CD4-positive, alpha-beta memory T cell (primary cell): ENCODE measurements at regions of chr2 and their contacts with region 1.

Region 1: GRCh38 chr2:62456721-62457539 is 49.1 kb downstream of the TMEM17 start:
- DNase-seq: peak in 4 of 5 donors; percentile 50 to 65 (median 54)
- H3K4me3 ChIP-seq: peak overlapping the region in 1 of 2 donors; percentile 24
- H3K4me3 Mint-ChIP-seq: peak overlapping the region in 7 of 8 donors; percentile 24 to 70 (median 50)
- H3K27ac ChIP-seq: no peak overlapping the region
- H3K27ac Mint-ChIP-seq: peak overlapping the region in 1 of 7 donors; percentile 66
- H3K4me1 ChIP-seq: peaks cover 4% of the 10 kb centered on the region
- H3K4me1 Mint-ChIP-seq: no peaks in the 10 kb centered on the region
- H3K27me3 ChIP-seq: no peaks in the 10 kb centered on the region
- H3K27me3 Mint-ChIP-seq: peaks cover 3 to 4% of the 10 kb centered on the region in 2 donors

Region 2: GRCh38 chr2:62467475-62468321 is 10.8 kb after region 1 on chr2:
- CTCF ChIA-PET with region 1: interaction called, 10 read pairs
- POLR2A ChIA-PET with region 1: no interaction called
- intact Hi-C with region 1: no loop called
- DNase-seq: no peak
- H3K4me3 ChIP-seq: no peak overlapping the region
- H3K4me3 Mint-ChIP-seq: no peak overlapping the region
- H3K27ac ChIP-seq: no peak overlapping the region
- H3K27ac Mint-ChIP-seq: no peak overlapping the region
- H3K4me1 ChIP-seq: no peaks in the 10 kb centered on the region
- H3K4me1 Mint-ChIP-seq: no peaks in the 10 kb centered on the region
- H3K27me3 ChIP-seq: no peaks in the 10 kb centered on the region
- H3K27me3 Mint-ChIP-seq: peaks cover 5 to 6% of the 10 kb centered on the region in 2 donors

Region 3: DNA sequence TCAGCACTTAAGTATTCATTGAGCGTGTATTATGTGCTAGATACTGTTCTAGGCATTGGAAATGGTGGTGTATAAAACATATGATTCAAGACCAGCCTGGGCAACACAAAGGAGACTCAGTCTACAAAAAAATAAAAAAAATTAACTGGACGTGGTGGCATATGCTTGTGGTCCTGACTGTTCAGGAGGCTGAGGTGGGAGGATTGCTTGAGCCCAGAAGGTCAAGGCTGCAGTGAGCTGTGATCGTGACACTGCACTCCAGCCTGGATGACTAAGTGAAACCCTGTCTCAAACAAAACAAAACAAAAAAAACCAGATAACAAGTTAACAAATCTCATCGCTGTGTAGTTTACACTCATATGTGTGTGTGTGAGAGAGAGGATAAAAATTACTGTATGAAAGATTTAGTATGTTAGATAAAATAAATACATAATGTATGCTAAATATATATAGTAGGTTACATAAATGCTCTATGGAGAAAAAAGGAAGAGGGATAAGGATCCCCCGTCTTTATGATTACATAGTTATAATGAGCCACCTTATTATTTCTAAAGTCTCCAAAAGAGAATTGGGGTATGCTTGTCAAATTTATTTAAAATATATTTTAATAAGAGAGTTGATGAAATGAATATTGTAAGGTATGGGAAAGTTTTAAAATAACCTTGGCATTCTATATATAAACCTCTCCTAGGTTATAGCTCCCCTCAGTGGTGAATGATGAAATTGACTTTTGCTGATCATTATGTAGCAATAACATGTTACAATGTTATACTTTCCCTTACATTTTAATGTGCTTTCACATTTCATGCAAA is 317.8 kb after region 1 on chr2:
- CTCF ChIA-PET with region 1: interaction called, 207 read pairs
- POLR2A ChIA-PET with region 1: no interaction called
- intact Hi-C with region 1: loop called (anchors 1 kb)
- DNase-seq: peak in 4 of 5 donors; percentile 25 to 42 (median 32)
- H3K4me3 ChIP-seq: no peak overlapping the region
- H3K4me3 Mint-ChIP-seq: no peak overlapping the region
- H3K27ac ChIP-seq: no peak overlapping the region
- H3K27ac Mint-ChIP-seq: peak overlapping the region in 1 of 7 donors; percentile 75
- H3K4me1 ChIP-seq: no peaks in the 10 kb centered on the region
- H3K4me1 Mint-ChIP-seq: peaks cover 0 to 11% (median 5%) of the 10 kb centered on the region in 4 donors
- H3K27me3 ChIP-seq: no peaks in the 10 kb centered on the region
- H3K27me3 Mint-ChIP-seq: no peaks in the 10 kb centered on the region

Region 4: DNA sequence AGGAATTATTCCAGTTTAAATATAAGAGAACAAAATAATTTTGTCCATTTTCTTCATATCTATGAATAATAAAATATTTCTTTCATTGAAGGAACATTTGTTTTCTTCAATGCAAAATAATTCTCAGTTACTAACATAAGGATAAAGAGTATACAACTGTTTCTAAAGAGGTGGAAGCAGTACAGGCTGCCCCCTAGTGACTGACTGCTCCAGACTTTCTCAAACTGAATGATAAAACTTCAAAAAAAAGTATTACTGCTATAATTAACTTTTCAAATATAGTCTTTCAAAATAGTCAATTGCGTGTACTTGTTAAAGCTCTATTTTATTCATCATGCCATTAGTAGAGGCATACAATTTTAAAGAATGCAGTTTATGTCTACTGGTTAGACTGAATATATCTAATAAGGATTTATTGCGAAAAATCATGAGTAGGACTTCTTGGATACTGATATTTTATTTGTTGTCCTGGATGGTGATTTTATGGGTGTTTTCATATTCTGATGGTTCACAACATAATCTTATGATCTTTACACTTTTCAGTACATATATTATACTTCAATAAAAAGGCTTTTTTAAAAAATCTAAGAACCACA is 1031.3 kb after region 1 on chr2:
- CTCF ChIA-PET with region 1: interaction called, 4 read pairs
- POLR2A ChIA-PET with region 1: no interaction called
- intact Hi-C with region 1: loop called (anchors 5 kb)
- DNase-seq: no peak
- H3K4me3 ChIP-seq: no peak overlapping the region
- H3K4me3 Mint-ChIP-seq: no peak overlapping the region
- H3K27ac ChIP-seq: no peak overlapping the region
- H3K27ac Mint-ChIP-seq: no peak overlapping the region
- H3K4me1 ChIP-seq: no peaks in the 10 kb centered on the region
- H3K4me1 Mint-ChIP-seq: no peaks in the 10 kb centered on the region
- H3K27me3 ChIP-seq: no peaks in the 10 kb centered on the region
- H3K27me3 Mint-ChIP-seq: no peaks in the 10 kb centered on the region